ENCODE measurements at regions of chr7 and their contacts with region 1.

Region 1: DNA sequence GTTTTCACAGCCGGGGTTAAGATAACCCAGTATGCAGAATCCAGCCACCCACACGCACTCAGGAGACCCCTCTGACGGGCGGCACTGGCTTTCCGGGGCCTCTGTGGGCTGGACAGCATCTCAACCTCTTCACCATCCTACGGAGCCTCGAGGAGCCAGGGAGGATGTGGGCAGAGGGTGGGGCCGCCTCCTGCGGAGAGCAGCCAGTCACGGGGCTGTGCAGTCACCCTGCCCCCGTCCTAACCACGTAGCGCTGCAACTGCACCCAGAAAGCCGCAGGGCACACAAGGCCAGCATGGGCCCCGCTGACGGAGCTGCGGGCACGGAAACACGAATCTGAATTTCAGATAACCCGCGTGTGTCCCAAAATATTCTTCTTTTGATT is 270.3 kb downstream of the ELFN1 start:
- DNase-seq: peak; percentile 78 to 98 (median 96)
- ATAC-seq: peak; percentile 95
- H3K4me3 ChIP-seq: peak overlapping the region; percentile 91
- H3K4me3 Mint-ChIP-seq: peak overlapping the region; percentile 92 to 99 (median 98)
- H3K27ac ChIP-seq: peak overlapping the region; percentile 96
- H3K27ac Mint-ChIP-seq: peak overlapping the region; percentile 87 to 100 (median 99)
- H3K4me1 ChIP-seq: peaks cover 35 to 65% of the 10 kb centered on the region in 2 donors
- H3K4me1 Mint-ChIP-seq: peaks cover 41 to 81% (median 64%) of the 10 kb centered on the region in 7 donors
- H3K27me3 ChIP-seq: no peaks in the 10 kb centered on the region
- H3K27me3 Mint-ChIP-seq: no peaks in the 10 kb centered on the region

Region 2: GRCh38 chr7:1892011-1892965 is 48.1 kb before region 1 on chr7:
- CTCF ChIA-PET with region 1: no interaction called
- POLR2A ChIA-PET with region 1: no interaction called
- intact Hi-C with region 1: loop called in 1 of 2 experiments (anchors 1 kb)
- DNase-seq: no peak
- ATAC-seq: no peak
- H3K4me3 ChIP-seq: no peak overlapping the region
- H3K4me3 Mint-ChIP-seq: peak overlapping the region in 1 of 10 donors; percentile 11
- H3K27ac ChIP-seq: no peak overlapping the region
- H3K27ac Mint-ChIP-seq: peak overlapping the region in 7 of 9 donors; percentile 32 to 88 (median 64)
- H3K4me1 ChIP-seq: no peaks in the 10 kb centered on the region
- H3K4me1 Mint-ChIP-seq: peaks cover 14 to 36% (median 24%) of the 10 kb centered on the region in 7 donors
- H3K27me3 ChIP-seq: no peaks in the 10 kb centered on the region
- H3K27me3 Mint-ChIP-seq: no peaks in the 10 kb centered on the region

Region 3: GRCh38 chr7:1925349-1925748 is 15.0 kb before region 1 on chr7:
- CTCF ChIA-PET with region 1: interaction called, 5 read pairs
- POLR2A ChIA-PET with region 1: interaction called, 88 read pairs
- intact Hi-C with region 1: loop called (anchors 1 kb)
- DNase-seq: no peak
- ATAC-seq: no peak
- H3K4me3 ChIP-seq: peak overlapping the region; percentile 6
- H3K4me3 Mint-ChIP-seq: peak overlapping the region; percentile 63 to 97 (median 73)
- H3K27ac ChIP-seq: peak overlapping the region; percentile 83
- H3K27ac Mint-ChIP-seq: peak overlapping the region; percentile 77 to 99 (median 89)
- H3K4me1 ChIP-seq: peaks cover 37 to 80% of the 10 kb centered on the region in 2 donors
- H3K4me1 Mint-ChIP-seq: peaks cover 63 to 89% (median 79%) of the 10 kb centered on the region in 7 donors
- H3K27me3 ChIP-seq: no peaks in the 10 kb centered on the region
- H3K27me3 Mint-ChIP-seq: peaks cover 0 to 18% (median 0%) of the 10 kb centered on the region in 5 donors

Region 4: GRCh38 chr7:1969459-1970284 is 29.3 kb after region 1 on chr7:
- CTCF ChIA-PET with region 1: no interaction called
- POLR2A ChIA-PET with region 1: interaction called, 5 read pairs
- intact Hi-C with region 1: loop called in 1 of 2 experiments (anchors 2 kb)
- DNase-seq: peak in 1 of 9 donors; percentile 18
- ATAC-seq: no peak
- H3K4me3 ChIP-seq: no peak overlapping the region
- H3K4me3 Mint-ChIP-seq: peak overlapping the region; percentile 17 to 73 (median 54)
- H3K27ac ChIP-seq: no peak overlapping the region
- H3K27ac Mint-ChIP-seq: peak overlapping the region; percentile 44 to 93 (median 79)
- H3K4me1 ChIP-seq: peaks cover 0 to 12% of the 10 kb centered on the region in 2 donors
- H3K4me1 Mint-ChIP-seq: peaks cover 20 to 55% (median 42%) of the 10 kb centered on the region in 7 donors
- H3K27me3 ChIP-seq: no peaks in the 10 kb centered on the region
- H3K27me3 Mint-ChIP-seq: no peaks in the 10 kb centered on the region

Region 5: GRCh38 chr7:2037808-2038522 is 97.6 kb after region 1 on chr7:
- CTCF ChIA-PET with region 1: no interaction called
- POLR2A ChIA-PET with region 1: interaction called, 9 read pairs
- intact Hi-C with region 1: loop called (anchors 1 to 2 kb)
- DNase-seq: peak in 7 of 9 donors; percentile 44 to 66 (median 53)
- ATAC-seq: peak; percentile 65
- H3K4me3 ChIP-seq: peak overlapping the region; percentile 83
- H3K4me3 Mint-ChIP-seq: peak overlapping the region; percentile 83 to 95 (median 92)
- H3K27ac ChIP-seq: peak overlapping the region; percentile 70
- H3K27ac Mint-ChIP-seq: peak overlapping the region; percentile 73 to 95 (median 92)
- H3K4me1 ChIP-seq: peaks cover 18 to 23% of the 10 kb centered on the region in 2 donors
- H3K4me1 Mint-ChIP-seq: peaks cover 37 to 66% (median 59%) of the 10 kb centered on the region in 7 donors
- H3K27me3 ChIP-seq: no peaks in the 10 kb centered on the region
- H3K27me3 Mint-ChIP-seq: no peaks in the 10 kb centered on the region

Region 6: GRCh38 chr7:2104107-2104710 is 163.8 kb after region 1 on chr7:
- CTCF ChIA-PET with region 1: no interaction called
- POLR2A ChIA-PET with region 1: no interaction called
- intact Hi-C with region 1: loop called in 1 of 2 experiments (anchors 5 kb)
- DNase-seq: peak; percentile 43 to 79 (median 70)
- ATAC-seq: peak; percentile 76
- H3K4me3 ChIP-seq: peak overlapping the region; percentile 15
- H3K4me3 Mint-ChIP-seq: peak overlapping the region in 9 of 10 donors; percentile 19 to 67 (median 56)
- H3K27ac ChIP-seq: peak overlapping the region; percentile 42
- H3K27ac Mint-ChIP-seq: peak overlapping the region; percentile 3 to 94 (median 71)
- H3K4me1 ChIP-seq: peaks cover 7 to 24% of the 10 kb centered on the region in 2 donors
- H3K4me1 Mint-ChIP-seq: peaks cover 18 to 42% (median 31%) of the 10 kb centered on the region in 7 donors
- H3K27me3 ChIP-seq: no peaks in the 10 kb centered on the region
- H3K27me3 Mint-ChIP-seq: no peaks in the 10 kb centered on the region

Region 7: DNA sequence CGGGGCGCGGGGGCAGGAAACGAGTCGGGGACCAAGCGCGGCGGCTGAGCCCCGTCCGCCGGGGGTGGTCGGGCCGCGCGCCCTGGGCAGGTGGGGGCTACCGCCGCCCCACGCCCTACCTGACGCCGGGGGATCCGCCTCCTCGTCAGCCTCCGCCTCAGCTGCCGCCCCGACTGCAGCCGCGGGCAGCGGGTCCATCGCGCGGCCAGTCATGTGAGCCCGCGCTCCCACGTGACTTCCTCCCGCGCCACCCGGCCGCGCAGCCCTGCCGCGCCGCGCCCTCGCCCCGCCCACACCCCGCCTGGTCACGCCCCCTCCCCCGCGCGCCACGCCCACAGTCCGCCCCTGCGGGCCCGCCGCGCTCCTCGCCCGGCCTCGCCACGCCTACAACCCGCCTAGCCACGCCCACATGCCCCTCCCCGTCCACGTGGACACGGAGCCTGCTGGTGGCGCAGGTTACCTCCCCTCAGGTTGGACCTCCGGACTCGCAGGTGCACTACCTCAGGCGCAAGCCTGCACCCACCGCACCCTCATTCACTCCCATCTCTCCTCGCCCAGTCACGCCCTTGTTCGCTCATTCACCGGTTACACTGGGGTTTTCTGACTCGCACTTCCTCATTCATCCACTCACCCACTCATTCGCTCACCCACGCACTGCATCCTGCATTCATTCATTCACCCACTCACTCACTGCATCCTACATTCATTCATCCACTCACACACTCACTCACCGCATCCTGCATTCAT is 374.0 kb after region 1 on chr7 and contains the start of gene SNX8:
- CTCF ChIA-PET with region 1: no interaction called
- POLR2A ChIA-PET with region 1: no interaction called
- intact Hi-C with region 1: loop called in 1 of 2 experiments (anchors 1 kb)
- DNase-seq: peak; percentile 91 to 99 (median 94)
- ATAC-seq: peak; percentile 98
- H3K4me3 ChIP-seq: peak within 1 kb of the TSS; percentile 59
- H3K4me3 Mint-ChIP-seq: peak within 1 kb of the TSS in 7 of 10 donors; percentile 87 to 96 (median 93)
- H3K27ac ChIP-seq: peak within 1 kb of the TSS; percentile 60
- H3K27ac Mint-ChIP-seq: peak within 1 kb of the TSS; percentile 62 to 89 (median 88)
- H3K4me1 ChIP-seq: no peaks in the 10 kb centered on the region
- H3K4me1 Mint-ChIP-seq: peaks cover 0 to 19% (median 15%) of the 10 kb centered on the region in 7 donors
- H3K27me3 ChIP-seq: no peaks in the 10 kb centered on the region
- H3K27me3 Mint-ChIP-seq: no peaks in the 10 kb centered on the region
- total RNA-seq, gene SNX8: 4.7 to 31.5 (median 9.4) TPM